ENCODE measurements at regions of chr2 and their contacts with region 1.

Region 1: DNA sequence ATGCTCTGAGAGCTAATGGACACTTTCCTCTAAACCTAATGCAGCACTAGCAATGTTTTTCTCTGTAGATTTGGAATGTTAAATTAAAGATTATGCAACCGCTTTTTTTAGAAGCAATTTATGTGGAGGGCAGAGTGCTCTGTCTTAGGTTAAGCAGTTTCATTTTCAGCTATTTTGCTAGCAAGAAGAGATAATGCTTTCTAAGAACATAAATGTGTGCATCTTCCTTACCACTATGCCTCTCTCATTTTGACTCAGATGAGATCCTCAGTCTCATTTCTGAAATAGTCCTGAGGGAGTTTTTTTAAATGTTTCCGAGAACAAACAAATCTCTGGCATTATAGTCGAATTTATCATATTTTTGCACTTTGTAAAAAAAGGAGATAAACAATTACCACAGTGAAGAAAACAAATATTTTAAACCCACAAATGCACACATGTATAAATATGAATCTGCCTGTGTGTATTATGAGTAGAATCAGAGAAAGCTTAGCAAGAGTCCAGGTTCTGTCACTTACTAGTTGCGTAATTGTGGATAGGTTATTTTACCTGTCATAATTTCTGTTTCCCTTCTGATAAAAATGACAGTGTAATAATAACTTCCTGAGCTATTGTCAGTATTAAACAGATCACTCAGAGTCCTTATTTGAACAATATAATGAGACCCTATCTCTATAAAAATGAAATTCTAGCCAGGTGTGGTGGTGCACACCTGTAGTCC is 207.7 kb upstream of the CRIM1 start:
- DNase-seq: peak; percentile 58
- H3K4me3 Mint-ChIP-seq: no peak overlapping the region
- H3K27ac Mint-ChIP-seq: no peak overlapping the region
- H3K4me1 Mint-ChIP-seq: peaks cover 22% of the 10 kb centered on the region
- H3K27me3 Mint-ChIP-seq: peaks cover 22% of the 10 kb centered on the region

Region 2: GRCh38 chr2:35973132-35973736 is 174.6 kb before region 1 on chr2:
- intact Hi-C with region 1: loop called (anchors 5 kb)
- DNase-seq: no peak
- H3K4me3 Mint-ChIP-seq: no peak overlapping the region
- H3K27ac Mint-ChIP-seq: no peak overlapping the region
- H3K4me1 Mint-ChIP-seq: peaks cover 3% of the 10 kb centered on the region
- H3K27me3 Mint-ChIP-seq: peaks cover 16% of the 10 kb centered on the region

Region 3: GRCh38 chr2:36088716-36089328 is 59.0 kb before region 1 on chr2:
- intact Hi-C with region 1: no loop called
- DNase-seq: no peak
- H3K4me3 Mint-ChIP-seq: no peak overlapping the region
- H3K27ac Mint-ChIP-seq: no peak overlapping the region
- H3K4me1 Mint-ChIP-seq: no peaks in the 10 kb centered on the region
- H3K27me3 Mint-ChIP-seq: peaks cover 4% of the 10 kb centered on the region

Region 4: GRCh38 chr2:36123995-36124394 is 23.8 kb before region 1 on chr2:
- intact Hi-C with region 1: loop called (anchors 1 kb)
- DNase-seq: no peak
- H3K4me3 Mint-ChIP-seq: no peak overlapping the region
- H3K27ac Mint-ChIP-seq: no peak overlapping the region
- H3K4me1 Mint-ChIP-seq: no peaks in the 10 kb centered on the region
- H3K27me3 Mint-ChIP-seq: peaks cover 25% of the 10 kb centered on the region

Region 5: GRCh38 chr2:36163520-36164239 is 15.8 kb after region 1 on chr2:
- intact Hi-C with region 1: no loop called
- DNase-seq: peak; percentile 21
- H3K4me3 Mint-ChIP-seq: no peak overlapping the region
- H3K27ac Mint-ChIP-seq: no peak overlapping the region
- H3K4me1 Mint-ChIP-seq: peaks cover 4% of the 10 kb centered on the region
- H3K27me3 Mint-ChIP-seq: peaks cover 33% of the 10 kb centered on the region

Region 6: GRCh38 chr2:36277146-36277808 is 129.4 kb after region 1 on chr2:
- intact Hi-C with region 1: loop called (anchors 1 kb)
- DNase-seq: no peak
- H3K4me3 Mint-ChIP-seq: no peak overlapping the region
- H3K27ac Mint-ChIP-seq: no peak overlapping the region
- H3K4me1 Mint-ChIP-seq: peaks cover 7% of the 10 kb centered on the region
- H3K27me3 Mint-ChIP-seq: no peaks in the 10 kb centered on the region